ENCODE measurements at regions of chr6 and their contacts with region 1.

Region 1: DNA sequence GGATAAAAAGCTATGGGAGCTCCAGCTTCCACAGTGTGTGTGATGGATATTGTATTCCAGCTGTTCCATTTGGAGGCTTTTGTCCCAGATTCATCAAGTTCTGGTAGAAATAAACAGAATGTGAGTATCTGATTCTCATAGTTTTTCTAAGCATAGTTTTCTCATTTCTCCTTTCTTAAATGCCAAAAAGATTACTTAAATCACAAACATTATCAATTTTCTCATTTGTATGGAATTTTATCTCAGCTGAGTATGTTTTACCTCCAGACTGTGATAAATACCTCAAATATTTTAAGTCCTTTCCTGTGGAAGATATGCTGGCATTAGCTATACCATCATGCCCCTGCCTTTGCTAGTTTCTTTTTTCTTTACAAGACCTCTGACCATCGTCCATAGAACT is 767.3 kb downstream of the TFAP2A start:
- DNase-seq: peak; percentile 32
- H3K4me3 ChIP-seq: no peak overlapping the region
- H3K27ac ChIP-seq: no peak overlapping the region
- H3K27me3 ChIP-seq: no peaks in the 10 kb centered on the region
- CTCF ChIP-seq: no peak

Region 2: DNA sequence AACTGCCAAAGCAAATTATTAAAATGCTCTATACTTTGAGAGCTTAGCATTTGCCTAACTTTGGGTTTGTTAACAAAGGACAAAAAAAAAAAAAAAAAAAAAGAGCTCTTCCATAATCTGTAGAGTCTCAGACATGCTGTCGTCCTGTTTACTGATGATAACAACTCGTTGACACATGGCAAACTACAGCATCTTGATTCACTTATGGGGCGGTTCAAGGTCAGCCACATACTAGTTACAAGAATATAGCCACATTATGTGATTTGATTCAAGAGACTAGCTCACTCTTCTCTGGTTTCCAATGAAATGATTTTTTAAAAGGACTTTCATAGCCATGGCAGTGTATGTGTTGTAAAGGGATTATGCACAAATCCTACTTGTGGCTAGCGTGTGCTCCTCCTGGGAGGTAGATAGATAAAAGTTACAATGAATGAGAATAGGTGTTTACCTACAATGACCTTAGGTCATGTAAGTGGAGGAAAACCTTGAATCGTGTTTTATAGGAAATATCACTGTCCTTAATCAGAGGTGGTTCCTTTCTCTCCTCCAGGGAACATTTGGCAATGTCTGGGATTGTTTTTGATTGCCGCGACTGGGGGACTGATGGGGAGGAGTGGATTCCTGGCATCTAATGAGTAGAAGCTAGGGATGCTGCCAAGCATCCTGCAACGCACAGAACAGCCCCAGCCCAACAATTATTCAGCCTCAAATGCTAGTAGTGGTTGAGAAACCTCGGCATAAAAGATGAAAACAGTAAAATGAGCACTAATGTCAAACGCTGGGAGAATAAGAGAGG is 243.1 kb before region 1 on chr6:
- CTCF ChIA-PET with region 1: no interaction called
- POLR2A ChIA-PET with region 1: interaction called, 10 read pairs
- DNase-seq: no peak
- H3K4me3 ChIP-seq: no peak overlapping the region
- H3K27ac ChIP-seq: no peak overlapping the region
- H3K27me3 ChIP-seq: no peaks in the 10 kb centered on the region
- CTCF ChIP-seq: no peak

Region 3: GRCh38 chr6:9492790-9493189 is 154.8 kb before region 1 on chr6:
- CTCF ChIA-PET with region 1: no interaction called
- POLR2A ChIA-PET with region 1: no interaction called
- DNase-seq: no peak
- H3K4me3 ChIP-seq: no peak overlapping the region
- H3K27ac ChIP-seq: no peak overlapping the region
- H3K27me3 ChIP-seq: no peaks in the 10 kb centered on the region
- CTCF ChIP-seq: no peak

Measured in AG04450 (cell line).